AG04450 (cell line): ENCODE measurements at regions of chr1 and their contacts with region 1.

Region 1: DNA sequence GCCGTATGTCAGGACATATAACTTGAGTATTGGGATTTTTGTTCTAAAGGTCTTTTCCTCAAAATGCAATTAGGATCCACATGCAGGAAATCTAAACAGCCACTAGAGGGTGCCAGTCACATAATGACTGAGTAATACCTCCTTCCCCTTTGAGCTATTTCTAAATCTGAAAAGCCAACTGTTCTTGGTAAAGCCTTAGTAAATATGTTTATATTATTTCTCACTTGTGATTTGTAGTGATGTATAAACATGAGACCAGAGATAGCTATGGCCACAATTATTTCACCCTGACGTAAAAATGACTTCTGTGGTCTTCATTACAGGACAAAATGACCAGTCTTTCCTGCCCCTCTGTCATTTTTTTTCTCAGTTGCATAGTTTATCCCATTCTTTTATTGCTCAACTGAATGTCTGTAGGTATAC is 41.0 kb upstream of the DR1 start:
- DNase-seq: peak; percentile 48
- H3K4me3 ChIP-seq: no peak overlapping the region
- H3K27ac ChIP-seq: no peak overlapping the region
- H3K27me3 ChIP-seq: no peaks in the 10 kb centered on the region
- CTCF ChIP-seq: peak; percentile 90

Region 2: DNA sequence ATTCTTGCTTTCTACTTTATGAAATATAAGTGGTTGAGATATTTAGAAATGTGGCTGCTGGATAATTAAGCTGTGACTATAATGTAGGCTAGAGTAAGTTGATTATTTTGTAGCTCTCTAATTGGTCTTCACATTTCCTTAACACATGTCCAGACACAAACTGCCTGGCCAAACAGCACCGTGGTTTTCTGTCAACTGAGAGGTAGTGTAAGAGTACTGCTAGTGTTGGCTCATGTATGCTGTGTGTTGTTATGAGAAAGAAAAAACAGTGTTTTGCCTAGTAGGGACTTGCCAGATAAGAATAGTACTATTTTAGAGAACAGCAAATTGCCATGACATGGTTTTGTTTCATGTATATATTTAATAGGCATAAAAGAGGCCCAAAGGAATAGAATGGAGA is 161.6 kb before region 1 on chr1:
- CTCF ChIA-PET with region 1: interaction called, 10 read pairs
- POLR2A ChIA-PET with region 1: no interaction called
- DNase-seq: no peak
- H3K4me3 ChIP-seq: no peak overlapping the region
- H3K27ac ChIP-seq: no peak overlapping the region
- H3K27me3 ChIP-seq: no peaks in the 10 kb centered on the region
- CTCF ChIP-seq: no peak

Region 3: DNA sequence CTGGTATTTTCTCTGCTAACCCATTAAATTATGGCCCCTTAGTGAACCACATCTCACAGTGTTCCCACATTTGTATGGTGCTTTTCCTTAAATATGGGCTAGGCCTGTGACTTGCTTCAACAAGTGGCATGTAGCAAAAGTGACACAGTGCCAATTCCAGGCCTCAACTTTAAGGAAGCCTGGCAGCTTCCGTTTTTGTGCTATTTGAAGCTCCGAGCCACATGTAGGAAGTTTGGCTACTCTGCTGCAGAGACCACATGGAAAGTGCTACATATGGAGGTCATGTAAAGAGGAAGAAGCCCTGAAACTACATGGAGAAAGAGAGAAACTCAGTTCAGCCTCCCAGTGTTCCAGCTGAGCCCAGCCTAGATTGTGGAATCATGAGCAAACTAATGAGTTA is 12.5 kb after region 1 on chr1:
- CTCF ChIA-PET with region 1: interaction called, 16 read pairs
- POLR2A ChIA-PET with region 1: no interaction called
- DNase-seq: no peak
- H3K4me3 ChIP-seq: no peak overlapping the region
- H3K27ac ChIP-seq: no peak overlapping the region
- H3K27me3 ChIP-seq: no peaks in the 10 kb centered on the region
- CTCF ChIP-seq: no peak

Region 4: DNA sequence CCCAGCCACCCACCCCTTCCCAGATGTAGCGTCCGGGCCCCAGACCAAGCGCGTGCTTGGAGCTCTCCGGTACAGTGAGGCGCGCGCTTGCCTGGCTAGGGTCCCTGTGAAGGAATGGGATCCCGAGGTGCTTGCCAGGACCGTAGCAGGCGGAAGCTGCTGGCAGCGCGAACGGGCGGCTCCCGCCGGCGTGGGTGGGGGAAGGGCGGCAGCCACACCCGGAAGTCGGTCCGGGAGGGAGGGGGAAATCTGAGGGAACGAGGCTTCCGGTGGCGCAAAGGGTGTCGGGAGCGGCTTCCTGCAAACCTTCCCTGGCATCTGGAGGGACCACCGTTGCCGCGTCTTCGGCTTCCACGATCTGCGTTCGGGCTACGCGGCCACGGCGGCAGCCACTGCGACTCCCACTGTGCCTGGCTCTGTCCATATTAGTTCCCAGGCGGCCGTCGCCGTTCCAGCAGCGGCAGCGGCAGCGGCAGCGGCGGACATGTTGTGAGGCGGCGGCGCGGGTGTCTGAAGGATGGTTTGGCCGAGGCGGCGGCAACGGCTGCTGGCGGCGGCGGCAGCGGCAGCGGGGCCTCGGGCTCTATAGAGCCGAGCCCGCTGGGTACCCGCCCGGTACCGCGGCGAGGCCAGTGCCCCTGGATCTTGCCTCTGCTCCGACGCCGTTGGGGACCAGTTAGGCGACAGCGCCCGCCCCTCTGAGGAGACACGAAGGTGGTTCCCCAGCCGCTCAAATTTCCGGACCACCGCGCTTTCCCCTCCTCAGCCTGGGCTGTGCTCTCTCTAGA is 41.1 kb after region 1 on chr1 and contains the start of gene DR1:
- CTCF ChIA-PET with region 1: interaction called, 14 read pairs
- POLR2A ChIA-PET with region 1: interaction called, 3 read pairs
- DNase-seq: peak; percentile 90
- H3K4me3 ChIP-seq: peak within 1 kb of the TSS; percentile 84
- H3K27ac ChIP-seq: peak within 1 kb of the TSS; percentile 96
- H3K27me3 ChIP-seq: no peaks in the 10 kb centered on the region
- CTCF ChIP-seq: no peak
- polyA plus RNA-seq, gene DR1: 36.1 and 44.9 TPM in 2 replicates

Region 5: GRCh38 chr1:93414749-93415148 is 110.0 kb after region 1 on chr1:
- CTCF ChIA-PET with region 1: interaction called, 11 read pairs
- POLR2A ChIA-PET with region 1: no interaction called
- DNase-seq: no peak
- H3K4me3 ChIP-seq: no peak overlapping the region
- H3K27ac ChIP-seq: no peak overlapping the region
- H3K27me3 ChIP-seq: peaks cover 7% of the 10 kb centered on the region
- CTCF ChIP-seq: no peak

Region 6: GRCh38 chr1:93629099-93630059 is 324.7 kb after region 1 on chr1:
- CTCF ChIA-PET with region 1: interaction called, 16 read pairs
- POLR2A ChIA-PET with region 1: no interaction called
- DNase-seq: peak; percentile 67
- H3K4me3 ChIP-seq: no peak overlapping the region
- H3K27ac ChIP-seq: no peak overlapping the region
- H3K27me3 ChIP-seq: no peaks in the 10 kb centered on the region
- CTCF ChIP-seq: peak; percentile 77